Endothelial cell of umbilical vein (primary cell): ENCODE measurements at regions of chr5 and their contacts with region 1.

Region 1: DNA sequence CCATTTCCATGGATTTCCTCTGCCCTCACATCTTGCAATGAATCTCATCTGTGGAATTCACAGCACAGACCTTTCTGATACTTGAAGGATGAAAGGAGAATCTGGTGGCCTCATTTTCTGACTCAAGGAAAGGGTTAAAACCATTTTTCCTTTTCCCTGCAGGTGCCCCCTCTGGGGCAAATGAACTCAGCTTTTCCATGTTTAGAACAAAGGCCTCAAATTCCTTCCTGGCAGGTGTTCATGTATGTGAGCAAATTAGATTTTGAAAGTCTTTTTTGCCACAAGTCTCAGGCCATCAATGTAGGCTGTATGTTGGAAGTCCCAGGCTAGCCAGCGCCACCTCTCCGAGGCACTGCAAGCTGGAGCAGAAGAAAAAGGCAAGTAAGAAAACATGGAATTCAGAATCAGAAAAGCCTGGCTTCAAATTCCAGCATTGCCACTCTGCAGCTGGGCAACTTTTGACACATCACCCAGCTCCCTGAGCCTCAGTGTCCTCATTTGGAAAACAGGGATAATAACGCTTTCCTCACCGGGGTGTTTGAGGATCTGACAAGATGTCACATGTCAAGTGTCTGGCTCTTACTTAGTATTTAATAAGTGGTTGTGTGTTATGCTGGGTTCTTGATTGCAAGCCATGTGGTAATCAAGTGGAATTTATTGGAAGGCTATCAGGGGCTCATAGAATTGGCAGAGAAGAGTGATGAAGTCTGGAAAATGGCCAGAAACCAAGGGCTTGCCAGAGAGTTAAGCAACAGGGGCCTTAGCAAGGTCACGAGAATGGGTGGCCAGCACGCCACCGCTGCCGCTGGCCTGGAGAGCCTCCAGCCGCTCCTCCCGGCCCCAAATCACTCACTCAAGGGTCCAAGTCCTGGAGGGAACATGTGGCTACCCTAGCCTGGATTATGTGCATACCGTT is 48.4 kb upstream of the SMIM23 start:
- DNase-seq: no peak
- H3K4me3 ChIP-seq: no peak overlapping the region
- H3K27ac ChIP-seq: no peak overlapping the region
- H3K4me1 ChIP-seq: no peaks in the 10 kb centered on the region
- H3K27me3 ChIP-seq: peaks cover 0 to 5% of the 10 kb centered on the region in 2 experiments
- CTCF ChIP-seq: no peak
- POLR2A ChIP-seq: no peak

Region 2: DNA sequence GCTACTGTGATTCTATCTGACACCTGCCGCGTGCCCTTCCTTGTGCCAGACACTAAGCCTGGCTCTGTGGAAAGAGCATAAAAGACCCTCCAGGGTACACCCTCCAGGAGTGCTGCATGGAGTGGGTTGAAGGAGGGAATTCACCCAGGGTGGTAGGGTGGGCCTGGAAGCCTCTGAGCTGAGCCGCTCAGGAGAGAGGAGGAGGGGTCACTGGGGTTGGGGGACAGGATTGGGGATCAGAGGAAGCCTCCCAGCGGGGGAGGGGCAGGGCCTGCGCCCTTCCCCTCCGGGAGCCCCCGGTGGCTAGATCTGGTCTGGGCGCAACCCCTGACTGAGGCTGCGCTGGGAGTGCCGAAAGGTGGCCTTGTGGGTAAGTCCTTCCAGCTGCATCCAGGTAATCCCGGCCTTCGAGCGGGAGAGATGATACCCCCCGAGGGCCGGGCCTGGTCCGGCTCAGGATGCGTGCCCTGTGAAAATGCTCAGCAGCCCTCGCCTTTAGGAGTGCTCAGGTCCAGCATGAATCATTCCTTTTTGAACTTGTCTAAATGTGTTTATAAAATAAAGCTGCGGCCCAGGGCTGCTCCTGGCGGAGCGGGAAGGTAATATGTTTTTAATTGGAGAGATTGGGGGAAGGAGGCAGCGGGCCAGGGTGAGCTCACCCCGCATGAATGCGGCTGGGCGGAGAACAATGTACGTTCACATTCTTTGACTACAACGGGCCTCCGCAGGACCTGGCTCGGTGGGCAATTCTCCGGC is 69.7 kb before region 1 on chr5:
- CTCF ChIA-PET with region 1: no interaction called
- POLR2A ChIA-PET with region 1: no interaction called
- dilution Hi-C with region 1: no loop called
- intact Hi-C with region 1: no loop called
- DNase-seq: peak; percentile 88
- H3K4me3 ChIP-seq: no peak overlapping the region
- H3K27ac ChIP-seq: peak overlapping the region; percentile 78
- H3K4me1 ChIP-seq: peaks cover 12% of the 10 kb centered on the region
- H3K27me3 ChIP-seq: no peaks in the 10 kb centered on the region
- CTCF ChIP-seq: peak; percentile 12 to 22
- POLR2A ChIP-seq: no peak

Region 3: GRCh38 chr5:172028167-172028566 is 290.9 kb after region 1 on chr5:
- CTCF ChIA-PET with region 1: no interaction called
- POLR2A ChIA-PET with region 1: no interaction called
- dilution Hi-C with region 1: no loop called
- intact Hi-C with region 1: no loop called
- DNase-seq: no peak
- H3K4me3 ChIP-seq: no peak overlapping the region
- H3K27ac ChIP-seq: no peak overlapping the region
- H3K4me1 ChIP-seq: peaks cover 4% of the 10 kb centered on the region
- H3K27me3 ChIP-seq: peaks cover 6 to 10% of the 10 kb centered on the region in 2 experiments
- CTCF ChIP-seq: no peak
- POLR2A ChIP-seq: no peak

Region 4: DNA sequence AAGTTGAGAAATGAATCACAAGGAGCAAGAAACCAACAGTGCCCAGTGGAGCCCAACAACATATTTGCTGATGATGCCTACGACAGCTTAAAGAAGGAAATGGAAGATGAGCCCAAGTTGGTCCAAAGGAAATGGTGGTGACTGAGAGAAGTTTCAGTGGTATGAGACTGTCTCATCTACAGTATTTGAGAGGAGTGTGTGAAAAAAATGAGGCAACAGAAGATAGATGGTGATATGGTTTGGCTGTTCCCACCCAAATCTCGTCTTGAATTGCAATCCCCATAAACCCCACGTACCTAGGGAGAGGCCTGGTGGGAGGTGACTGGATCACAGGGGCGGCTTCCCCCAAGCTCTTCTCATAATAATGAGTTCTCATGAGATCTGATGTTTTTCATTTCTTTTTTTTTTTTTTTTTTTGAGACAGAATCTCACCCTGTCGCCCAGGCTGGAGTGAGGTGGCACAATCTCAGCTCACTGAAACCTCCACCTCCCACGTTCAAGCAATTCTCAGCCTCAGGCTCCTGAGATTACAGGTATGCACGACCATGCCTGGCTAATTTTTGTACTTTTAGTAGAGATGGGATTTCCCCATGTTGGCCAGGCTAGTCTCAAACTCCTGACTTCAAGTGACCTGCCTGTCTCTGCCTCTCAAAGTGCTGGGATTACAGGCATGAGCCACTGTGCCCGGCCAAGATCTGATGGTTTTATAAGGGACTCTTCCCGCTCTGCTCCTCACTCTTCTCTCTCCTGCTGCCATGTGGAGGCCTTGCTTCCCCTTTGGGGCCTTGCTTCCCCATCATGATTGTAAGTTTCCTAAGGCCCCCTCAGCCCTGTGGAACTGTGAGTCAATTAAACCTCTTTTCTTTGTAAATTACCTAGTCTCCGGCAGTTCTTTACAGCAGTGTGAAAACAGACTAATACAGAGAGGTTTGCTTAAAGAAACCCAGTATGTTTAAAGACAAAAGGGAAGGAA is 487.0 kb after region 1 on chr5:
- CTCF ChIA-PET with region 1: no interaction called
- POLR2A ChIA-PET with region 1: interaction called, 13 read pairs
- dilution Hi-C with region 1: no loop called
- intact Hi-C with region 1: no loop called
- DNase-seq: no peak
- H3K4me3 ChIP-seq: no peak overlapping the region
- H3K27ac ChIP-seq: no peak overlapping the region
- H3K4me1 ChIP-seq: no peaks in the 10 kb centered on the region
- H3K27me3 ChIP-seq: no peaks in the 10 kb centered on the region
- CTCF ChIP-seq: no peak
- POLR2A ChIP-seq: no peak